Activated CD8-positive, alpha-beta memory T cell treated with anti-CD3 and anti-CD28 coated beads, Interleukin-2, amount 10 ng/mL, durations not matched to agents 7 days and 5 days (primary cell): ENCODE measurements at regions of chr19 and their contacts with region 1.

Region 1: GRCh38 chr19:16247353-16248182 is 49.9 kb downstream of the AP1M1 start:
- DNase-seq: peak; percentile 87
- ATAC-seq: peak; percentile 94
- H3K4me3 Mint-ChIP-seq: no peak overlapping the region
- H3K27ac Mint-ChIP-seq: peak overlapping the region; percentile 0
- H3K4me1 Mint-ChIP-seq: peaks cover 20% of the 10 kb centered on the region
- H3K27me3 Mint-ChIP-seq: peaks cover 20% of the 10 kb centered on the region

Region 2: GRCh38 chr19:16330368-16330801 is 82.8 kb after region 1 on chr19:
- CTCF ChIA-PET with region 1: interaction called, 14 read pairs
- DNase-seq: peak; percentile 98
- ATAC-seq: peak; percentile 83
- H3K4me3 Mint-ChIP-seq: peak overlapping the region; percentile 35
- H3K27ac Mint-ChIP-seq: peak overlapping the region; percentile 88
- H3K4me1 Mint-ChIP-seq: peaks cover 66% of the 10 kb centered on the region
- H3K27me3 Mint-ChIP-seq: peaks cover 29% of the 10 kb centered on the region

Region 3: DNA sequence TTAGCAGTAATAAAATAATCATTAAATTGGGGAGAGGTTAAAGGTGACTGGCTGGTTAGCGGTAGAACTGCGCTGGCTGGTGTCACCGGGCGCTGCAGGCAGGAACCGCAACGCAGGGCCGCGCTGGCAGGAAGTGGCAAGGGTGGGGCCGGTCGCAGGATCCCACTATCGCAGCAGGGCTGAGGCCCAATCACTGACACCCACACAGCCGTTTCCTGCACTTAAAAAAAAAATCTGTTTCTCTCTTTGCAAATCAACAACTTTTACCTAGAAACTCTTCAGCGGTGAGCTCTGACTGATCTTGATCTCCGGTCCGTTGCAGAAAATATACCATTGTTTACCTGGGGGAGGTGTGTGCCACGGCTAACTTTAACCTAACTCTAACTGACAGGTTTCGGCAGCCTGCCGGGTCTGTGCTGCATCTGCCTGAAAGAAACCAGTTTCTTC is 124.0 kb after region 1 on chr19:
- CTCF ChIA-PET with region 1: interaction called, 18 read pairs
- DNase-seq: peak; percentile 96
- ATAC-seq: peak; percentile 63
- H3K4me3 Mint-ChIP-seq: peak overlapping the region; percentile 57
- H3K27ac Mint-ChIP-seq: no peak overlapping the region
- H3K4me1 Mint-ChIP-seq: peaks cover 38% of the 10 kb centered on the region
- H3K27me3 Mint-ChIP-seq: peaks cover 10% of the 10 kb centered on the region

Region 4: GRCh38 chr19:16376649-16377048 is 129.1 kb after region 1 on chr19:
- CTCF ChIA-PET with region 1: interaction called, 137 read pairs
- DNase-seq: peak; percentile 53
- ATAC-seq: peak; percentile 25
- H3K4me3 Mint-ChIP-seq: no peak overlapping the region
- H3K27ac Mint-ChIP-seq: no peak overlapping the region
- H3K4me1 Mint-ChIP-seq: peaks cover 38% of the 10 kb centered on the region
- H3K27me3 Mint-ChIP-seq: peaks cover 5% of the 10 kb centered on the region

Region 5: GRCh38 chr19:16417660-16418596 is 170.4 kb after region 1 on chr19:
- CTCF ChIA-PET with region 1: interaction called, 12 read pairs
- DNase-seq: peak; percentile 74
- ATAC-seq: peak; percentile 95
- H3K4me3 Mint-ChIP-seq: no peak overlapping the region
- H3K27ac Mint-ChIP-seq: no peak overlapping the region
- H3K4me1 Mint-ChIP-seq: peaks cover 11% of the 10 kb centered on the region
- H3K27me3 Mint-ChIP-seq: no peaks in the 10 kb centered on the region